ENCODE measurements at regions of chr9 and their contacts with region 1.

Region 1: DNA sequence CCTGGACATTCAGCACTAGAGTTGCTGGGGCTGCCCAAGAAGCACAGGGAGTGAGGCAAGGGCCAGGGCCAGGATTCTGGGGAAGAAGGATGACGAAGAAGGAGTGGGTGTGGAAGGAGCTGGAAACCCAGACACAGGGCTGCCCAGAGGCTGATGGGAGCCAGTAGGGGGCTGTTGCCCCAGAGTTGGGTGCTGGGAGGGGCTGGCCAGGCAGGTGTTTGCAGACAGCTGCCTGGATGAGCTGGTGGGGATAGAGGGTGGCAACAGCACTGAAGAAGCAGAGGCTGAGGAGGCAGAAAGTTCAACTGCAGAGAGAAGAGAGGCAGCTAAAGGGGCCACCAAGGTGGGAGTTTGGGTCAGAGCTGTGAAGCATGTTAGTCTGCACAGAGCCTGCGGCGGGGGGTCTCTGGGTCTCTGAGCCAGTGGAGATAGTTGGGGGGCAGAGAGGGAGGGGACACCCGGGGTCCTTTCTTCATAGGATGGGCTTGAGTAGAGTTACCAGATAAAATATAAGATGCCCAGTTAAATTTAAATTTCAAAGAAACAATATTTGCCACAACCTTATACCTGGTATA is 2.5 kb upstream of the AQP7 start:
- DNase-seq: no peak
- H3K4me3 ChIP-seq: no peak overlapping the region
- H3K27ac ChIP-seq: no peak overlapping the region
- H3K4me1 ChIP-seq: peaks cover 0 to 15% of the 10 kb centered on the region in 2 donors
- H3K27me3 ChIP-seq: no peaks in the 10 kb centered on the region
- CTCF ChIP-seq: no peak

Region 2: GRCh38 chr9:33517373-33517772 is 112.5 kb after region 1 on chr9:
- intact Hi-C with region 1: loop called (anchors 5 kb)
- DNase-seq: no peak
- H3K4me3 ChIP-seq: no peak overlapping the region
- H3K27ac ChIP-seq: no peak overlapping the region
- H3K4me1 ChIP-seq: no peaks in the 10 kb centered on the region
- H3K27me3 ChIP-seq: no peaks in the 10 kb centered on the region
- CTCF ChIP-seq: peak in 2 of 3 experiments; percentile 41 to 57